Mammary epithelial cell (primary cell): ENCODE measurements at regions of chr2 and their contacts with region 1.

Region 1: GRCh38 chr2:224039124-224039940 is at the start of gene SERPINE2:
- DNase-seq: peak; percentile 63
- H3K4me3 ChIP-seq: peak within 1 kb of the TSS; percentile 80 to 92 (median 81)
- H3K27ac ChIP-seq: peak within 1 kb of the TSS; percentile 24
- H3K4me1 ChIP-seq: peaks cover 25% of the 10 kb centered on the region
- H3K27me3 ChIP-seq: no peaks in the 10 kb centered on the region
- CTCF ChIP-seq: peak in 1 of 2 donors; percentile 59
- total RNA-seq, gene SERPINE2: 490 to 535 TPM

Region 2: DNA sequence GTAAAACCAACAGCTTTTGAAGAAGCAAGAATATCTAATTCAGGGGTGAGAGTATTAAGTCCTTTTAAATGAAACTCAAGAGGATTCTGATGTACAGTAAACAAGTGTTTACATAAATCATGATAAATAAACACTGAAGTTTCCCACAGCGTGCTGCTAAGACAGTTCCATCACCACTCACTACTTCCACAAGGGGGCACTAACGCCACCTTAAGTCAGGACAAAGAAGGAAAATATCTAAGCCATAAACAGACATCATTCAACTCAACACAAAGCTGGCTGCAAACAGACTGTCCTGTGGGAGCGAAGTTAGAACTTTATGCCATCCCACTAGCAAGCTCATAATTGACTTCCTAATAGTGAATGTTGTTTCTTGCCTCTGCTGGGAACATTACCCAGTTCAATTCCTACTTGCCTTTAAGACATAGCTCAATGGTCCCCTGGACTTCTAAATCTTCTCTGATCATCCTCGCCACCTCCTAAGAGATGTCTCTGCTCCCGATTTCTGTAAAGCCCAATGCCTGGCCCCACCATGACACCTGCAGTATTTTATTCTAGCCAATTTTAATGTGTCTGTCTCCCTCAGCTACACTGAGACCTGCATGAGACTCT is 45.6 kb before region 1 on chr2:
- CTCF ChIA-PET with region 1: no interaction called
- dilution Hi-C with region 1: no loop called
- in situ Hi-C with region 1: no loop called
- intact Hi-C with region 1: loop called (anchors 1 kb)
- DNase-seq: peak; percentile 48
- H3K4me3 ChIP-seq: no peak overlapping the region
- H3K27ac ChIP-seq: no peak overlapping the region
- H3K4me1 ChIP-seq: peaks cover 12% of the 10 kb centered on the region
- H3K27me3 ChIP-seq: no peaks in the 10 kb centered on the region
- CTCF ChIP-seq: peak; percentile 81 to 83

Region 3: GRCh38 chr2:224101820-224102630 is 62.7 kb after region 1 on chr2:
- CTCF ChIA-PET with region 1: no interaction called
- dilution Hi-C with region 1: no loop called
- in situ Hi-C with region 1: no loop called
- intact Hi-C with region 1: loop called (anchors 1 kb)
- DNase-seq: peak; percentile 94
- H3K4me3 ChIP-seq: no peak overlapping the region
- H3K27ac ChIP-seq: peak overlapping the region; percentile 54
- H3K4me1 ChIP-seq: peaks cover 45% of the 10 kb centered on the region
- H3K27me3 ChIP-seq: no peaks in the 10 kb centered on the region
- CTCF ChIP-seq: no peak

Region 4: DNA sequence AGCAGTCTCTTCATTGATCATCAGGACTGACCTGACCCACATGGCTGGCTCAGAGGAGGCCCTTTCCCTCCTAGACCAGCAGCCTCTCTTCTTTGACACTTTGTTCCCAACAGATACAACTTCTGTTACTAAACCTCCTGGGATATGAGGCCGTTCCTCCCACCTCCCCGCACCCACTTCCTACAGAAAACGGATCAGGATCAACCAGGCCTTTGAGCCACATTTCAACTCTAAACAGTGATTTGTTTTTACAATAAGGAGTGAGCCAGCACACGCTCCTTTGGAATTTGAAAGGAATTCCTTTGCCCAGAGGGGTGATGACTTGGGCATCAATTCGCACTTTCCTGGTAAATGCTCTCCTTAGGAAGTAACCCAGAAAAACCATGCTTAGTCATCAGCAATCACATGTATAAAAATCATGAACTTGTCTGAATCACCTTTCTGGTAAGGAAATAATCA is 182.2 kb after region 1 on chr2:
- CTCF ChIA-PET with region 1: no interaction called
- dilution Hi-C with region 1: no loop called
- in situ Hi-C with region 1: no loop called
- intact Hi-C with region 1: loop called (anchors 1 kb)
- DNase-seq: peak; percentile 94
- H3K4me3 ChIP-seq: no peak overlapping the region
- H3K27ac ChIP-seq: peak overlapping the region; percentile 90
- H3K4me1 ChIP-seq: peaks cover 34% of the 10 kb centered on the region
- H3K27me3 ChIP-seq: no peaks in the 10 kb centered on the region
- CTCF ChIP-seq: no peak